HCT116 (cell line): ENCODE measurements at regions of chr20 and their contacts with region 1.

Region 1: GRCh38 chr20:62668441-62669027 is 26.2 kb downstream of the SLCO4A1 start:
- DNase-seq: peak; percentile 24
- ATAC-seq: peak; percentile 65
- H3K4me3 ChIP-seq: no peak overlapping the region
- H3K27ac ChIP-seq: peak overlapping the region; percentile 34; the same call in 1 of the 2 replicates
- H3K4me1 ChIP-seq: peaks cover 6 to 24% of the 10 kb centered on the region in 2 experiments; a peak in 2 of 4 replicates
- H3K27me3 ChIP-seq: no peaks in the 10 kb centered on the region
- CTCF ChIP-seq: peak; percentile 76 to 85 (median 81)
- POLR2A ChIP-seq: no peak
- RAD21 ChIP-seq: peak; percentile 89

Region 2: GRCh38 chr20:62368976-62369814 is 299.3 kb before region 1 on chr20:
- CTCF ChIA-PET with region 1: no interaction called
- POLR2A ChIA-PET with region 1: no interaction called
- RAD21 ChIA-PET with region 1: no interaction called
- intact Hi-C with region 1: no loop called
- DNase-seq: no peak
- ATAC-seq: peak; percentile 36
- H3K4me3 ChIP-seq: peak overlapping the region; percentile 34 to 83
- H3K27ac ChIP-seq: peak overlapping the region; percentile 74; the same call in 1 of the 2 replicates
- H3K4me1 ChIP-seq: peaks cover 53 to 65% of the 10 kb centered on the region in 2 experiments
- H3K27me3 ChIP-seq: no peaks in the 10 kb centered on the region
- CTCF ChIP-seq: peak in 2 of 3 experiments; percentile 33 to 44; a peak in 3 of 6 replicates
- POLR2A ChIP-seq: no peak
- RAD21 ChIP-seq: no peak

Region 3: GRCh38 chr20:62636446-62636845 is 32.1 kb before region 1 on chr20:
- CTCF ChIA-PET with region 1: no interaction called
- POLR2A ChIA-PET with region 1: no interaction called
- RAD21 ChIA-PET with region 1: no interaction called
- intact Hi-C with region 1: no loop called
- DNase-seq: no peak
- ATAC-seq: no peak
- H3K4me3 ChIP-seq: no peak overlapping the region
- H3K27ac ChIP-seq: no peak overlapping the region
- H3K4me1 ChIP-seq: peaks cover 4 to 11% of the 10 kb centered on the region in 2 experiments
- H3K27me3 ChIP-seq: no peaks in the 10 kb centered on the region
- CTCF ChIP-seq: no peak
- POLR2A ChIP-seq: no peak
- RAD21 ChIP-seq: no peak

Region 4: GRCh38 chr20:62740286-62741141 is 72.0 kb after region 1 on chr20:
- CTCF ChIA-PET with region 1: no interaction called
- POLR2A ChIA-PET with region 1: no interaction called
- RAD21 ChIA-PET with region 1: interaction called in 1 of 2 experiments, 3 read pairs
- intact Hi-C with region 1: loop called (anchors 2 kb)
- DNase-seq: peak; percentile 97
- ATAC-seq: peak; percentile 65
- H3K4me3 ChIP-seq: peak overlapping the region; percentile 26 to 37; a peak in 2 of 4 replicates
- H3K27ac ChIP-seq: peak overlapping the region; percentile 100
- H3K4me1 ChIP-seq: peaks cover 65 to 94% of the 10 kb centered on the region in 2 experiments
- H3K27me3 ChIP-seq: no peaks in the 10 kb centered on the region
- CTCF ChIP-seq: 0 out of 6 replicates have a peak, but pooled peaks of 1 of the 3 experiments have one; percentile 2
- POLR2A ChIP-seq: no peak
- RAD21 ChIP-seq: no peak

Region 5: GRCh38 chr20:62808211-62808865 is 139.8 kb after region 1 on chr20:
- CTCF ChIA-PET with region 1: no interaction called
- POLR2A ChIA-PET with region 1: no interaction called
- RAD21 ChIA-PET with region 1: no interaction called
- intact Hi-C with region 1: loop called (anchors 1 kb)
- DNase-seq: no peak
- ATAC-seq: peak; percentile 68
- H3K4me3 ChIP-seq: no peak overlapping the region
- H3K27ac ChIP-seq: peak overlapping the region; percentile 8; the same call in 1 of the 2 replicates
- H3K4me1 ChIP-seq: peaks cover 19 to 35% of the 10 kb centered on the region in 2 experiments; a peak in 3 of 4 replicates
- H3K27me3 ChIP-seq: no peaks in the 10 kb centered on the region
- CTCF ChIP-seq: peak in 2 of 3 experiments; percentile 88 to 94; a peak in 5 of 6 replicates
- POLR2A ChIP-seq: no peak
- RAD21 ChIP-seq: no peak; the same call in none of the 2 replicates